ENCODE measurements at regions of chr7 and their contacts with region 1.

Region 1: DNA sequence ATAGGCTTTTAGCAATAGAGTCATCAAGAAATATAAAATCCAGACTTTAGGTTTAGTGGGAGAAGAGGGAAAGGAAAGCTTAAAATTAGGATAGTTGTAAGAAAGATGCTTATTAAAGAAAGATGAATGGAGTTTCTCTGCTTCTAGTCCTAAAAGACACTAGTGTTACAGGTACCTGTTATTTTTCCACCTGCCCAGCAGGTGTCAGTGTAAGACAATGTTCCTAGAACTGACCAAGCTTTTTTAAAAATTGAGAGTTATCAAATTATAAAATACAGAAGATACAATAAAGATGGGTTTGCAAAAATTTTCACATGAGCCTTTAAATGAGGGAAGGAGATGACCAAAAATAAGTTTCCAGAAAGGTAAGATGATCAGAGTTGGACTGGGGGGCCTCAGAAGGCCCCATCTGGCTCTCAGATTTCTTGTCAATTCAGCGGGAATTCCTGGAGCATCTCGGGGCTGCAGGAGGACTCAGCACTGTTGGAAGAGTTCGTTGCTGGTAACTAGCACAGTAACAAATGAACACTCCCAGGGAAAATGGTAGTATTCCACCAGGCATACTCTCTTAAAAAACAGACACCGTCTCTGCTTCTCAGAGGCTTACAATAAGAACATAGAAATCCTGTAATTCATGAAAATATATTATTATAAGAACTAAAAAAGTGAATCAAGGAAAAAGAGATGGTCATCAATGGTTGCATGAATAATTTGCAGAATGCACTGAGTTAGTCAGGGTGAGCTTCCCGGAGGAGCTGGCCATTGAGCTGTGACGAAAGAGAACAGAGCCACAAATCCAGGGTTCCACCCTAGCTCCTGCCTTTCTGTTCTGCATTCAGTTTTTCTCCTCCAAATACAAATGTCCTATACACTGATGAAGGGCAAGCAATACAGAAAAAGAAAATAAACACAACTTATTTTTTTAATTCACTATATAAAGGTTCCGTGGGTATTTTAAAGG is 71.8 kb upstream of the PIK3CG start:
- DNase-seq: peak; percentile 54
- H3K4me3 Mint-ChIP-seq: no peak overlapping the region
- H3K27ac Mint-ChIP-seq: no peak overlapping the region
- H3K4me1 Mint-ChIP-seq: no peaks in the 10 kb centered on the region
- H3K27me3 Mint-ChIP-seq: peaks cover 42% of the 10 kb centered on the region
- CTCF ChIP-seq: peak; percentile 77

Region 2: GRCh38 chr7:106460792-106461254 is 332.5 kb before region 1 on chr7:
- CTCF ChIA-PET with region 1: no interaction called
- POLR2A ChIA-PET with region 1: no interaction called
- intact Hi-C with region 1: no loop called
- DNase-seq: no peak
- H3K4me3 Mint-ChIP-seq: no peak overlapping the region
- H3K27ac Mint-ChIP-seq: no peak overlapping the region
- H3K4me1 Mint-ChIP-seq: no peaks in the 10 kb centered on the region
- H3K27me3 Mint-ChIP-seq: no peaks in the 10 kb centered on the region
- CTCF ChIP-seq: no peak

Region 3: DNA sequence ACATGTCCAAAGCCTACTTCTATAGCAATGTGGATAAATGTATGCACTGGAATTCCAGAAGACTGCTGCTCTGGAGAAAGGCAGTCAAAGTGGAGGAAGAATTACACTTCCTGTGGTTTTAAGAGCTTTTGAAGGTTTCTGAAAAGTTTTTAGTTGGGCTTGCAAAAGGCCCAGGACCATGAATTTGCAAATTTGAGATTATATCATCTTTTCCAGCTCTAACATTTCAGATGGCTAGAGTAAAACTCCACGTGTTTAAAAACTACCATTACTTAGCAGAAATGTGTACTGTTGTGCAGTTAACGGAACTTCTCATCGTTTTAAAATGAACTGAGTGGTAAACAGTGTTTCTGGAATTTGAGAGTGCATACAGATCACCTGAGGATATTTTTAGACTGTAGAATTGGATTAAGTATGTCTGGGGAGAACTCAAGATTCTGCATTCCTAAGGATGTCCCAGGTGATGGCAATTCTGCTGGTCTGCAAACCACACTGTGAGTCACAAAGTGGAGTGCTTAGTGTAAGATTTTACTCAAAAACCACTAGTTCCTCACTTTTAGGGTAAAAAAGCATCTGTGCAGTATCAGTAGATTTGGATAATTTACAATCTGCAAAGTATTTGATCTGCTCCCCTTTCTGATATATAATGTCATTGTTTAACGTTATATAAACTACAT is 99.5 kb before region 1 on chr7:
- CTCF ChIA-PET with region 1: no interaction called
- POLR2A ChIA-PET with region 1: no interaction called
- intact Hi-C with region 1: no loop called
- DNase-seq: no peak
- H3K4me3 Mint-ChIP-seq: no peak overlapping the region
- H3K27ac Mint-ChIP-seq: no peak overlapping the region
- H3K4me1 Mint-ChIP-seq: no peaks in the 10 kb centered on the region
- H3K27me3 Mint-ChIP-seq: no peaks in the 10 kb centered on the region
- CTCF ChIP-seq: no peak

Region 4: GRCh38 chr7:106812027-106812643 is 18.8 kb after region 1 on chr7:
- CTCF ChIA-PET with region 1: interaction called, 14 read pairs
- POLR2A ChIA-PET with region 1: interaction called, 4 read pairs
- intact Hi-C with region 1: no loop called
- DNase-seq: no peak
- H3K4me3 Mint-ChIP-seq: no peak overlapping the region
- H3K27ac Mint-ChIP-seq: no peak overlapping the region
- H3K4me1 Mint-ChIP-seq: no peaks in the 10 kb centered on the region
- H3K27me3 Mint-ChIP-seq: no peaks in the 10 kb centered on the region
- CTCF ChIP-seq: no peak

Region 5: GRCh38 chr7:106947244-106947728 is 154.0 kb after region 1 on chr7:
- CTCF ChIA-PET with region 1: interaction called, 3 read pairs
- POLR2A ChIA-PET with region 1: no interaction called
- intact Hi-C with region 1: loop called (anchors 10 kb)
- DNase-seq: peak; percentile 79
- H3K4me3 Mint-ChIP-seq: no peak overlapping the region
- H3K27ac Mint-ChIP-seq: no peak overlapping the region
- H3K4me1 Mint-ChIP-seq: no peaks in the 10 kb centered on the region
- H3K27me3 Mint-ChIP-seq: peaks cover 68% of the 10 kb centered on the region
- CTCF ChIP-seq: peak; percentile 52

Measured in MCF 10A (cell line).